OCI-LY7 (cell line): ENCODE measurements at regions of chr9 and their contacts with region 1.

Region 1: GRCh38 chr9:93159601-93160471 is 24.1 kb upstream of the WNK2 start:
- DNase-seq: peak; percentile 84
- H3K4me3 ChIP-seq: no peak overlapping the region
- H3K27ac ChIP-seq: no peak overlapping the region
- H3K4me1 ChIP-seq: peaks cover 8% of the 10 kb centered on the region
- CTCF ChIP-seq: peak; percentile 99

Region 2: DNA sequence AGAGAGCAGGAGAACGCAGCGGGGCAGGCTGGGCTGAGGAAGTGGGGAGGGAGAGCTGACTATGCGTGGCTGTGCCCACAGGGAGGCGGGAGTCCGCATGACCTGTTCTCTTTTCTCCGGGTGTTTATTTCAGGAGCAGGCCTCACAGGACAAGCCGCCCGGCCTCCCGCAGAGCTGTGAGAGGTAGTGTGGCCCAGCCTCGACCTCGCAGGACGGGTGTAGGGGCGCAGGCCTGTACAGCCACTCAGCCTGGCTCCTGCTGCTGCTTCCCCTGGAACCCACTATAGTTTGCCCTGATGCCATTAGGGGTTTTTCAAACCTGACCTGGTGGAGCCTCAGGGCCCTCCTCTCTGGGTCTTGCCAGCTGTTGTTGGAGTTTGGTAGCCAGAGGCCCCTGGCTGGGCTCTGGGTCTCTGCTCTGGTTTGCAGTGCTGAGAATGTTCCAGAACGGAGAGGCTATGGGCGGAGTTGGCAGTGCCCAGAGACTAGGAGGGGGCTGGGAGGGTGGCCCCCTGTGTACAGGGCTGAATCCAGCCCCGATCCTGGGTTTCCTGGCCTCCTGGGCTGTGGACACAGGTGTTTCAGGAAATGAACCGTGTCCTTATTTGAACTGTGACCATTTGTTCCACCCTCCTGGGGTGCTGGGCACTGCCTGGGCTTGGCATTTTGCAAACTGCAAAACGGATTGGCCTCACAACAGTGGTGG is 102.9 kb after region 1 on chr9:
- CTCF ChIA-PET with region 1: no interaction called
- POLR2A ChIA-PET with region 1: no interaction called
- intact Hi-C with region 1: loop called (anchors 2 kb)
- DNase-seq: no peak
- H3K4me3 ChIP-seq: no peak overlapping the region
- H3K27ac ChIP-seq: peak overlapping the region; percentile 64
- H3K4me1 ChIP-seq: peaks cover 69% of the 10 kb centered on the region
- CTCF ChIP-seq: no peak

Region 3: DNA sequence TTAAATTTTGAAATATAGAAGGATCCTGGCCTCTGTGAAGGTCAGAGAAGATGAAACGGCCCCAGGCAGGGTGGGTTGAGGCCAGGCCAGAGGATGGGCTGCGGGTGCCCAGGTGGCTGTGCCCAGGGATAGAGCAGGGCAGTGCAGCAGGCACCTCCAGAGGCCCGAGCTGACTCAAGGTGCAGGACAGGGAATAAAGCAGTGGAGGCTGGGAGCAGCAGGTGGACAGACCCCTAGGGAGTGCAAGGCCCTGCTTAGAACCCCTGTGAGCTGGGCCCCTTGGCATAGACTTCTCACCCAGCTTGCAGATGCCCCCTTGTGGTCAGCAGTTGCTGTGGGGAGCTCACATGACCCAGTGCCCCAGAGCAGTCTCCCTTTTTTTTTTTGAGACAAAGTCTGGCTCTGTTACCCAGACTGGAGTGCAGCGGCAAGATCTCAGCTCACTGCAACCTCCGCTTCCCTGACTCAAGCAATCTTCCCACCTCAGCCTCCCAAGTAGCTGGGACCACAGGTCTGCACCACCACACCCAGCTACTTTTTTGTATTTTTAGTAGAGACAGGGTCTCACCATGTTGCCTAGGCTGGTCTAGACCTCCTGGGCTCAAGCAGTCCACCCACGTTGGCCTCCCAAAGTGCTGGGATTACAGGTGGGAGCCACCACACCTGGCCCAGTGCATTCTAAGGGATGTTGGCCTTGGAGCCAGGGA is 142.9 kb after region 1 on chr9:
- CTCF ChIA-PET with region 1: interaction called, 5 read pairs
- POLR2A ChIA-PET with region 1: no interaction called
- intact Hi-C with region 1: loop called (anchors 1 kb)
- DNase-seq: peak; percentile 86
- H3K4me3 ChIP-seq: no peak overlapping the region
- H3K27ac ChIP-seq: peak overlapping the region; percentile 61
- H3K4me1 ChIP-seq: peaks cover 52% of the 10 kb centered on the region
- CTCF ChIP-seq: peak; percentile 79

Region 4: GRCh38 chr9:93431583-93431991 is 271.8 kb after region 1 on chr9:
- CTCF ChIA-PET with region 1: no interaction called
- POLR2A ChIA-PET with region 1: no interaction called
- intact Hi-C with region 1: loop called (anchors 10 kb)
- DNase-seq: no peak
- H3K4me3 ChIP-seq: no peak overlapping the region
- H3K27ac ChIP-seq: no peak overlapping the region
- H3K4me1 ChIP-seq: peaks cover 6% of the 10 kb centered on the region
- CTCF ChIP-seq: no peak

Region 5: GRCh38 chr9:93453047-93453914 is 293.4 kb after region 1 on chr9 and contains the start of gene FAM120AOS:
- CTCF ChIA-PET with region 1: interaction called, 3 read pairs
- POLR2A ChIA-PET with region 1: no interaction called
- intact Hi-C with region 1: loop called (anchors 5 kb)
- DNase-seq: peak; percentile 91
- H3K4me3 ChIP-seq: peak within 1 kb of the TSS; percentile 83
- H3K27ac ChIP-seq: peak within 1 kb of the TSS; percentile 74
- H3K4me1 ChIP-seq: peaks cover 58% of the 10 kb centered on the region
- CTCF ChIP-seq: no peak
- total RNA-seq, gene FAM120AOS: 47.1 and 50.2 TPM in 2 replicates

Region 6: GRCh38 chr9:93566408-93567270 is 406.8 kb after region 1 on chr9:
- CTCF ChIA-PET with region 1: no interaction called
- POLR2A ChIA-PET with region 1: no interaction called
- intact Hi-C with region 1: loop called (anchors 1 kb)
- DNase-seq: peak; percentile 97
- H3K4me3 ChIP-seq: peak overlapping the region; percentile 70
- H3K27ac ChIP-seq: peak overlapping the region; percentile 70
- H3K4me1 ChIP-seq: peaks cover 23% of the 10 kb centered on the region
- CTCF ChIP-seq: peak; percentile 89